ENCODE measurements at regions of chr21 and their contacts with region 1.

Region 1: GRCh38 chr21:38805328-38806152 is at the start of gene ETS2:
- DNase-seq: peak; percentile 88 to 98
- H3K4me3 ChIP-seq: peak within 1 kb of the TSS; percentile 91
- CTCF ChIP-seq: no peak
- POLR2A ChIP-seq: peak in 1 of 2 donors; percentile 87
- total RNA-seq, gene ETS2: 154 to 644 (median 289) TPM

Region 2: GRCh38 chr21:38639571-38640354 is 165.8 kb before region 1 on chr21:
- intact Hi-C with region 1: no loop called
- DNase-seq: no peak
- H3K4me3 ChIP-seq: no peak overlapping the region
- CTCF ChIP-seq: no peak
- POLR2A ChIP-seq: no peak

Region 3: GRCh38 chr21:38755681-38756371 is 49.7 kb before region 1 on chr21:
- intact Hi-C with region 1: loop called (anchors 10 kb)
- DNase-seq: peak; percentile 76 to 89
- H3K4me3 ChIP-seq: no peak overlapping the region
- CTCF ChIP-seq: no peak
- POLR2A ChIP-seq: no peak

Region 4: GRCh38 chr21:39132248-39132647 is 326.7 kb after region 1 on chr21:
- intact Hi-C with region 1: loop called (anchors 5 kb)
- DNase-seq: no peak
- H3K4me3 ChIP-seq: no peak overlapping the region
- CTCF ChIP-seq: no peak
- POLR2A ChIP-seq: no peak

Measured in lower leg skin (tissue), 4 donors.